Mammary epithelial cell (primary cell): ENCODE measurements at regions of chr6 and their contacts with region 1.

Region 1: GRCh38 chr6:151036869-151037680 is 171.6 kb downstream of the MTHFD1L start:
- DNase-seq: peak; percentile 81
- H3K4me3 ChIP-seq: no peak overlapping the region
- H3K27ac ChIP-seq: peak overlapping the region; percentile 94
- H3K4me1 ChIP-seq: peaks cover 41% of the 10 kb centered on the region
- H3K27me3 ChIP-seq: no peaks in the 10 kb centered on the region
- CTCF ChIP-seq: no peak

Region 2: DNA sequence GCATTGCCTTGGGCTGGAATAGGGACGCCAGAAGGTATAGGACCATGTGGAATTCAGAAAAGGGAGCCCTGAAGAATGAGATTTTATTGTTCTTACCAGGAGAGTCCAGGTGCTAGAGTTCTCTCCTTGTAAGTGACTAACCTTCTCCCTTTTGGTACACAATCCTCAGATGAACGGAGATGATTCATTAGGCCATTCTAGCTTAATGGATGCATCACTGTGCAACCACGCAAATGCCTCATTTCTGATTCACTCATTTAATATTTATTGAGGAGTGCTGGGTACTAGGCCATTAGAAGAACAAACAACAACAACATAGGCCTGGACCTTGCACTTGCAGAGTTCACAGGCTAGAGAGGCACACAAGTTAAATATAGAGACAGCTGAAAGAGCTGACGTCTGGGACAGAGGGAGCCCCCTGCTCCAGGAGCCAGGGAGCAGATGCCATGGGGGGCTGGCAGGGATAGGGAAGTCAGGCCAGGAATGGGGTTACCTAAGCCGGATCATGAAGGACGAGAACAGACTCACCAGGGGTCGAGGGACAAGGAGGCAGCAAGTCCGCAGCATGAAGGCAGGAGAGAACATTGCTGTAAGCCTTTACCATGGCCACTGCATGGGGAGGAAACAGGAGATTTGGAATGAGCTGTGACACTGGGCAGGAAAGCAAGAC is 23.2 kb after region 1 on chr6:
- CTCF ChIA-PET with region 1: no interaction called
- dilution Hi-C with region 1: no loop called
- in situ Hi-C with region 1: no loop called
- intact Hi-C with region 1: loop called (anchors 1 kb)
- DNase-seq: peak; percentile 95
- H3K4me3 ChIP-seq: no peak overlapping the region
- H3K27ac ChIP-seq: peak overlapping the region; percentile 96
- H3K4me1 ChIP-seq: peaks cover 42% of the 10 kb centered on the region
- H3K27me3 ChIP-seq: no peaks in the 10 kb centered on the region
- CTCF ChIP-seq: no peak